ENCODE measurements at regions of chr11 and their contacts with region 1.

Region 1: DNA sequence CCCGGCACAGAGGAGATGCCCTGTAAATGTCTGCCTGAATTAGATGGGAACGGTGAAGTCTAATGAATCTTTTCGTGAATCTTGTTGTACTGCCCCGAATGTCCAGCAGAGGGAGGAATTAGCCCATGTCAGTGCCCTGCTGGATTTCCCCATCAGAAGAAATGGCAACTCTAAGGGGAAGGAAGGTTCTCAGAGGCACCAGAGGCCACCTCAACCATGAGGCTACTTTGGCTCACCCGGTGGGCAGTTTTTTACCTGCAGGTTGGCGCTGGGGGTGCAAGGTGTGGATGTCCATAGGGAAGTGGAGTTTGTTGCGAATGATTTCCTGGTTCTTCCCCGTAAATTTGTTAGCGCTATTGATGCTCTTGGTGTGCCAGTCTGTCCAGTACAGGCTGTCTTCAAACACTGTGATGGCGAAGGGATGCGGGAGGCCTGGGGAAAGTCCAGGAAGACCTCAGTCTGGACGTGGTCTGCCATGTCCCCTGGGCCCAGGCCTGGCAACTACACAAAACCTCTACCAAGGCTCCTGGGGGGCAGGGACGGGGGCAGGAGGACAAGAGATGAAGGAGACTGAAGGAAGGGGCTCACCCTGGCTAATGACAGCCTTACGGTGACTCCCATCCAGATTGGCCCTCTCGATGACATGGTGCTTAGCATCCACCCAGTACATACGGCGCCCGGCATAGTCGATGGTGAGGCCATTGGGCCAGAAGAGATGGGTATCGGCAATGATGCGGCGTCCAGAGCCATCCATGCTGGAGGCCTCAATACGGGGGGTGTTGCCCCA is 28.5 kb downstream of the LRP4 start:
- DNase-seq: peak; percentile 83
- ATAC-seq: peak; percentile 83
- H3K4me3 ChIP-seq: no peak overlapping the region
- H3K27ac ChIP-seq: no peak overlapping the region
- H3K4me1 ChIP-seq: no peaks in the 10 kb centered on the region
- H3K27me3 ChIP-seq: no peaks in the 10 kb centered on the region
- CTCF ChIP-seq: peak; percentile 81

Region 2: GRCh38 chr11:47152953-47153950 is 263.4 kb after region 1 on chr11:
- CTCF ChIA-PET with region 1: interaction called, 3 read pairs
- POLR2A ChIA-PET with region 1: no interaction called
- intact Hi-C with region 1: loop called (anchors 1 kb)
- DNase-seq: peak; percentile 79
- ATAC-seq: peak; percentile 86
- H3K4me3 ChIP-seq: no peak overlapping the region
- H3K27ac ChIP-seq: no peak overlapping the region
- H3K4me1 ChIP-seq: no peaks in the 10 kb centered on the region
- H3K27me3 ChIP-seq: no peaks in the 10 kb centered on the region
- CTCF ChIP-seq: peak; percentile 95

Region 3: DNA sequence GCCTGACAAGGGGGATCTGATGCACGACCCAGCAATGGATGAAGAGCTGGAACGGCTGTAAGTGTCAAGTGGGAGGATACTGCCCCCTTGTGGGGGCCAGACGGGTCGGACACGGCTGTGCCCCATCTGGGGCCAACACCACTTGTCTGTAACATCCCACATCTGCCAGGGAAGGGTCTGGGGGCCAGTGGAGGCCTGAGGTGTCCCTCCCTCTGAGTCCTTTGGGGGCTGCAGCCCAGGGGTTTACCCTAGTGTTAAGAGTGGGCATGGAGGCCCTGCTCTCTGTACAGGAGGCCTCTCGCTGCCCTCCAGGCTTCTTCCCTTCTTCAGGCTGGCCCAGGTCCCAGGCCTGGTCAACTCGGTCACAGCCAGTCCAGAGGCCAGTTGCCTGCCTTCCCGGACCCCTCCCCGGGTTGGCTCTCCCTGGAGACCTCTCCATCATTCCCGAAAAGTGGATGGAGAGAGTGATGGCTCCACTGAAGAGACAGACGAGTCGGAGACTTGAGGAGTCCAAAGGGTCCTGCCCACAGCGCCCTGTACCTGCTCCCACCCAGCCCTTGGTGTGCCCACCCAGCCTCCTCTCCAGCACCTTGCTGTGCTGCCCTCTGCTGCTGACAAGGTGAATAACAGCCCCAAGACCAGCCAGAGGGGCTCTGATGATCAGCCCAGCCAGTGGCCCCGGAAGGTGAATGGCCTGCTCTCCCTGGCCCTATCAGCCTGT is 271.4 kb after region 1 on chr11:
- CTCF ChIA-PET with region 1: no interaction called
- POLR2A ChIA-PET with region 1: no interaction called
- intact Hi-C with region 1: loop called (anchors 1 kb)
- DNase-seq: peak; percentile 71
- ATAC-seq: peak; percentile 83
- H3K4me3 ChIP-seq: no peak overlapping the region
- H3K27ac ChIP-seq: no peak overlapping the region
- H3K4me1 ChIP-seq: no peaks in the 10 kb centered on the region
- H3K27me3 ChIP-seq: no peaks in the 10 kb centered on the region
- CTCF ChIP-seq: peak; percentile 75